ENCODE measurements at regions of chr9 and their contacts with region 1.

Region 1: DNA sequence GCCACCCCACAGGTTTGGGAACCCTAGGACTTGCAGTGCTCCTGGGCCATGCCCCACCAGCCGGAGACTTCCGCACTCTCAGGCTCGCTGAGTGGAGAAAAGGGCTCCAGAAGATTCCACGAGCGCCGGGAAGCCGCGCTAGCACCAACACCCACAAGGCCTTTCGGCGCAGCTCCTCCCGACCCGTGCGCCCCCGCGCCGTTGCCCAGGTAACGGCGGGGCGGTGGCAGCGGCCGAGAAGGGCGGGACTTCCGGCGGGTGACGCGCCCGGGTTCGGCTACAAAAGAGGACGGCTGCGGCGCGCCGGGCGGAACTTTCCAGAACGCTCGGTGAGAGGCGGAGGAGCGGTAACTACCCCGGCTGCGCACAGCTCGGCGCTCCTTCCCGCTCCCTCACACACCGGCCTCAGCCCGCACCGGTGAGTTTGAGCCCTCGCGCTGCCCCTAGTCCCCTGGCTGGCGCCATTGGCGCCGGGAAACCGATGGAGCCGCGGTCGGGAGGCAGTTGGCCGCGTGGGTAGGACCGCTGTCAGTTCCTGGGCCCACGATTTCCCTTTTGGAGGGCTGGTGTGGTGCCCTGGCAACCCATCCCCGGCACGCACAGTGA is at the start of gene DNAJA1:
- DNase-seq: peak; percentile 98
- total RNA-seq, gene DNAJA1: 87.6 TPM

Region 2: DNA sequence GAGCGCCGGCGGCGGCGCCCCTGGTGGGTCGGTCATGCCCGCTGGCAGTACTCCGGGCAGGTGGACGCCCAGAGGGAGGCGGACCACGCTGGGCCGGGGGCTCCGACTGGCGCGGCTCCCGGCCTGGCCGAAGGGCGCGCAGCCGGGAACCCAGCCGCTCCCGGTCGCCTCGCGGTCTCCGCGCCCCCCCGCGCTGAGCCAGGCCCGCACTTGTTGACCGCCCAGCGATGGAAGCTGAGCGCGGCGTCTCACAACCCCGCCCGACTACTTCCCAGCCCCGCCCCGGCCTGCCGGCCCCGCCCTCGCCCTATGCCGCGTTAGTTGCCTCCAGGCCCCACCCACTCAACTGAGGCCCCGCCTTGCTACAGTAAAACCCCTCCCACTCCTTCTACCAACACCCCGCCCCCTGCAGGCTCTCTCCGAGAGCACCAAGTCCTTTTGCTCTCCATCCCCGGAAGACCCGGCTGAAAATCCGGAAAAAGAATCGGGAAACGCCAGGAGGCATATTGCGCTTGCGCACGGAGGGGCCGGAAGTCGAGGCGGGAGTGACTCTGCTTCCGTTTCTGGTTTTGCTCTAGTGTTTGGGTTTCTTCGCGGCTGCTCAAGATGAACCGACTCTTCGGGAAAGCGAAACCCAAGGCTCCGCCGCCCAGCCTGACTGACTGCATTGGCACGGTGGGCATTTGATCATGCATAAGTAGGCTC is 239.6 kb after region 1 on chr9 and contains the starts of genes BAG1 and CHMP5:
- intact Hi-C with region 1: loop called (anchors 5 kb)
- DNase-seq: peak; percentile 100
- total RNA-seq, gene BAG1: 150 TPM
- total RNA-seq, gene CHMP5: 53.8 TPM

Measured in cardiac septum (tissue), 1 donor.